A549 (cell line): ENCODE measurements at regions of chr17 and their contacts with region 1.

Region 1: DNA sequence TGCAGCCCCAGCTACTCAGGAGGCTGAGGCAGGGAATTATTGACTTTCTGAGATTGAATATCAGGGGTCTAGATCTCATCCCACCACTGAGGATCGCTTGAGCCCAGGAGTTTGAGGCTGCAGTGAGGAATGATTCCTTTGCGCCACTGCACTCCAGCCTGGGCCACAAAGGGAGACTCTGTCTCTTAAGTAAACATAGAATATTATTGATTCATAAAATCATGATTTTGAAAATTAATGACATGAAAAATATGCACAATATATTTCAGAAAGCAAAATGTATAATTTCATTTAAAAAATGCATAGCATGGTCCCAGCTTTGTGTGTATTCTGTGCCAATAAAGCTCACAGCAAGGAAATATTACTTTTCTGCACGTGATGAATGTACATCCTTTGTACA is 1.6 kb upstream of the VPS53 start:
- DNase-seq: no peak
- ATAC-seq: no peak
- H3K4me3 ChIP-seq: peak overlapping the region; percentile 70
- H3K27ac ChIP-seq: peak overlapping the region; percentile 79 to 91
- H3K4me1 ChIP-seq: peaks cover 25% of the 10 kb centered on the region
- CTCF ChIP-seq: no peak
- EP300 ChIP-seq: no peak
- POLR2A ChIP-seq: no peak
- RAD21 ChIP-seq: no peak

Region 2: GRCh38 chr17:688100-688989 is 27.9 kb before region 1 on chr17:
- CTCF ChIA-PET with region 1: no interaction called
- POLR2A ChIA-PET with region 1: no interaction called
- DNase-seq: peak in 1 of 2 experiments; percentile 67
- ATAC-seq: peak in 1 of 2 experiments; percentile 34; a peak in 2 of 6 replicates
- H3K4me3 ChIP-seq: no peak overlapping the region
- H3K27ac ChIP-seq: no peak overlapping the region
- H3K4me1 ChIP-seq: peaks cover 38% of the 10 kb centered on the region
- CTCF ChIP-seq: peak; percentile 21; the same call in 2 of the 3 replicates
- EP300 ChIP-seq: no peak
- POLR2A ChIP-seq: no peak
- RAD21 ChIP-seq: peak in 1 of 2 experiments; percentile 41; a peak in 3 of 5 replicates

Region 3: DNA sequence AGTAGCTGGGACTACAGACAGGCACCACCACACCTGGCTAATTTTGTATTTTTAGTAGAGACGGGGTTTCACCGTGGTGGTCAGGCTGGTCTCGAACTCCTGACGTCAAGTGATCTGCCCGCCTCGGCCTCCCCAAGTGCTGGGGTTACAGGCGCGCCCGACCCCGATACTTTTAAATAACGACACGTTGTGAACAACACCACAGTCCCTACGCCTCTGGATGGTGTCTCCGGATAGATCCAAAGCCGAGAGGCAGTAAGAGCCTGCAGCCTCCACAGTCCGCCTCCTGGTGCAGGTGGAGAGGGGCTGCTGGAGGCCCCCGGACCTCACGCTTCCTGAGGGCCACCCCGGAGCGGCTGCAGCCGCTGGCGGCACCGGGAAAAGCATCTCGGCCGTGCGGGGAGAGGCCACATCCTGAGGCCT is 15.4 kb after region 1 on chr17:
- CTCF ChIA-PET with region 1: interaction called, 15 read pairs
- POLR2A ChIA-PET with region 1: interaction called, 6 read pairs
- DNase-seq: no peak
- ATAC-seq: peak; percentile 58 to 64
- H3K4me3 ChIP-seq: peak overlapping the region; percentile 80
- H3K27ac ChIP-seq: peak overlapping the region; percentile 89 to 96
- H3K4me1 ChIP-seq: peaks cover 14% of the 10 kb centered on the region
- CTCF ChIP-seq: no peak
- EP300 ChIP-seq: no peak
- POLR2A ChIP-seq: no peak
- RAD21 ChIP-seq: no peak